Transverse colon (tissue), 4 donors: ENCODE measurements at regions of chr20 and their contacts with region 1.

Region 1: GRCh38 chr20:38645980-38646858 is 44.6 kb downstream of the ARHGAP40 start:
- DNase-seq: peak; percentile 81
- H3K4me3 ChIP-seq: peak overlapping the region in 1 of 4 donors; percentile 21
- H3K27ac ChIP-seq: no peak overlapping the region
- H3K4me1 ChIP-seq: peaks cover 0 to 9% (median 7%) of the 10 kb centered on the region in 4 donors
- H3K27me3 ChIP-seq: peaks cover 78% of the 10 kb centered on the region
- CTCF ChIP-seq: peak; percentile 86 to 95 (median 93)
- EP300 ChIP-seq: no peak
- POLR2A ChIP-seq: no peak

Region 2: DNA sequence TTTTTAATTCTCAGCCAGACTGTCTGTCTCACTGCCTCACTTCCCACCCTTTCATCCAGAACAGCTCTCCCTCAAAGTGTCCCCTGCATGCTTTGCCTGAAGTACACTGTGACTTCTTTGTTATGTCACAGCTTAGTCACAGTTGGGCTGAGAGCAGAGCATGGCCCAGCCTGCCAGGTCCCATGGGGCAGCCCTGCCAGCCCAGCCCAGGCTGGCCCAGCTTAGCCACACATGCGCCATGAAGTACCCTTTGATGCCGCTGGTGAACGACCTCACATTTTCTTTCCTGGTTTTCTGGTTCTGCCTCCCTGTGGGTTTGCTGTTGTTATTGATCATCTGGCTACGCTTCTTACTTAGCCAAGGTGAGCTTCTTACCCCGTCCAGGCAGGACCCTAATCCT is 65.2 kb before region 1 on chr20 and contains the start of gene ADIG:
- in situ Hi-C with region 1: no loop called
- intact Hi-C with region 1: no loop called
- DNase-seq: no peak
- H3K4me3 ChIP-seq: no peak within 1 kb of the TSS
- H3K27ac ChIP-seq: no peak within 1 kb of the TSS
- H3K4me1 ChIP-seq: no peaks in the 10 kb centered on the region
- H3K27me3 ChIP-seq: peaks cover 10% of the 10 kb centered on the region
- CTCF ChIP-seq: no peak
- EP300 ChIP-seq: no peak
- POLR2A ChIP-seq: no peak
- total RNA-seq, gene ADIG: not detected

Region 3: DNA sequence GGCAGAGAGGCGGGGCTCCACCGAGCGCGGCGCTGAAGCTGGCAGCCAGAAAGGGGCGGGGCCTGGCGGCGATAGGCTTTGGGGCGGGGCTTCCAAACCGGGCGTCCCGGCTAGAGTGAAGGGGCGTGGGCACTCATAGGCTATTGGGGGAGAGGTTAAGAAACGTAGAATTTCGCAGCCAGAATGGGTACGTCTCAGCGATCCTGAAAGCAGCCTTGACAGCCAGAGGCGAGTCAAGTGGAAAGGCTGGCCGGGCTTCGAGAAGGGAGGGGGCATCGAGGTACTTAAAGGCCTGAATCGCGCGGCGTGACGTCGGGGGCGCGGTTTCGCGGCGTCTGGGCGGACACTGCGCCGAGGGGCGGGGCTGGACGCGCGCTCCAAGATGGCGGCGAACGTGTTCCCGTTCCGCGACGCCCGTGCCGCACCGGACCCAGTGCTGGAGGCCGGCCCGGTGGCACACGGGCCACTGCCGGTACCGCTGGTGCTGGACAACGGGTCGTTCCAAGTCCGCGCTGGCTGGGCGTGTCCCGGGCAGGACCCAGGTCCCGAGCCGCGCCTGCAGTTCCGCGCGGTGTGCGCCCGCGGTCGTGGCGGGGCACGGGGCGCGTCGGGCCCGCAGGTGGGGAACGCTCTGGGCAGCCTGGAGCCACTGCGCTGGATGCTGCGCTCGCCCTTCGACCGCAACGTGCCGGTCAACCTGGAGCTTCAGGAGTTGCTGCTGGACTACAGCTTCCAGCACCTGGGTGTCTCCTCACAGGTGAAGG is 102.1 kb after region 1 on chr20 and contains the start of gene ACTR5:
- in situ Hi-C with region 1: loop called in 3 of 4 experiments (anchors 10 kb)
- intact Hi-C with region 1: no loop called
- DNase-seq: peak; percentile 97
- H3K4me3 ChIP-seq: peak within 1 kb of the TSS; percentile 55 to 98 (median 90)
- H3K27ac ChIP-seq: peak within 1 kb of the TSS; percentile 85 to 90 (median 89)
- H3K4me1 ChIP-seq: peaks cover 6 to 18% (median 14%) of the 10 kb centered on the region in 4 donors
- H3K27me3 ChIP-seq: peaks cover 5% of the 10 kb centered on the region
- CTCF ChIP-seq: no peak
- EP300 ChIP-seq: no peak
- POLR2A ChIP-seq: peak; percentile 52
- total RNA-seq, gene ACTR5: 7.2 to 21.3 (median 11.4) TPM

Region 4: DNA sequence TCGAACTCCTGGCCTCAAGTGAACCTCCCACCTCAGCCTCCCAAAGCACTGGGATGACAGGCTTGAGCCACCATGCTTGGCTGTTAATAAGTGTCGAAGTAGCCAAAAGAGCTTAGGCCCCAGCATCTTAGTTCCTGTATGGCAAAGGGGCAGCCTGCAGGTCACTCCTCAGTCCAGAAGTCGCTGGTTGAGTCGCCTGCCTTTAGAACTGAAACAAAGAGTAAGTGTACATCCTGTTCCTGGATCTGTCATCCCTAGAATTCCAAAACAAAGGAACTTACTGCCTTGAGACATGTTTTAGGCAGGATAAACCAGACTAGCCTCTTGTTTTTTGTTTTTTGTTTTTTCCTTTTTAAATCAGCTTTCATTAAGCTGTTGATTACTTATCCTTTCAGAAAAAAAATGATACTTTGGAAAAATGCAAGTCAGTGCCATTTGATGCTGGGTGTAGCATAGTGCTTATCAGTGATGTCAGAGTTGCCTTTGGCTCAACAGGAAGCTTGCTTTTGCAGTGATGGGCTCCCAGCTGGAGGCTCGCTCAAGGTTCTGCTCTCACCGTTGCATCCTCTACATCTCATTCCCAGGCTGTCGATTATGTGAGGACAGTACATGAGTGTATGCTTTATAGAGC is 111.0 kb after region 1 on chr20:
- in situ Hi-C with region 1: loop called in 2 of 4 experiments (anchors 10 kb)
- intact Hi-C with region 1: loop called (anchors 5 kb)
- DNase-seq: no peak
- H3K4me3 ChIP-seq: no peak overlapping the region
- H3K27ac ChIP-seq: no peak overlapping the region
- H3K4me1 ChIP-seq: no peaks in the 10 kb centered on the region
- H3K27me3 ChIP-seq: no peaks in the 10 kb centered on the region
- CTCF ChIP-seq: no peak
- EP300 ChIP-seq: no peak
- POLR2A ChIP-seq: no peak

Region 5: GRCh38 chr20:38893565-38894090 is 247.4 kb after region 1 on chr20:
- in situ Hi-C with region 1: loop called in 1 of 4 experiments (anchors 25 kb)
- intact Hi-C with region 1: loop called (anchors 10 kb)
- DNase-seq: peak; percentile 78
- H3K4me3 ChIP-seq: peak overlapping the region in 2 of 4 donors; percentile 12 to 36
- H3K27ac ChIP-seq: peak overlapping the region in 2 of 4 donors; percentile 17 to 44
- H3K4me1 ChIP-seq: peaks cover 4 to 13% (median 7%) of the 10 kb centered on the region in 4 donors
- H3K27me3 ChIP-seq: peaks cover 22% of the 10 kb centered on the region
- CTCF ChIP-seq: peak; percentile 68 to 95 (median 92)
- EP300 ChIP-seq: no peak
- POLR2A ChIP-seq: no peak

Region 6: GRCh38 chr20:38907918-38908677 is 261.9 kb after region 1 on chr20:
- in situ Hi-C with region 1: loop called in 1 of 4 experiments (anchors 25 kb)
- intact Hi-C with region 1: no loop called
- DNase-seq: no peak
- H3K4me3 ChIP-seq: no peak overlapping the region
- H3K27ac ChIP-seq: no peak overlapping the region
- H3K4me1 ChIP-seq: no peaks in the 10 kb centered on the region
- H3K27me3 ChIP-seq: no peaks in the 10 kb centered on the region
- CTCF ChIP-seq: no peak
- EP300 ChIP-seq: no peak
- POLR2A ChIP-seq: no peak

Region 7: GRCh38 chr20:39049684-39050554 is 403.7 kb after region 1 on chr20:
- in situ Hi-C with region 1: loop called in 1 of 4 experiments (anchors 25 kb)
- intact Hi-C with region 1: no loop called
- DNase-seq: peak; percentile 84
- H3K4me3 ChIP-seq: peak overlapping the region; percentile 49 to 70 (median 59)
- H3K27ac ChIP-seq: peak overlapping the region; percentile 71 to 78 (median 74)
- H3K4me1 ChIP-seq: peaks cover 3 to 13% (median 7%) of the 10 kb centered on the region in 4 donors
- H3K27me3 ChIP-seq: no peaks in the 10 kb centered on the region
- CTCF ChIP-seq: peak; percentile 92 to 99 (median 99)
- EP300 ChIP-seq: no peak
- POLR2A ChIP-seq: no peak